ENCODE measurements at regions of chrX and their contacts with region 1.

Region 1: GRCh38 chrX:106894392-106894909 is 8.7 kb downstream of the RIPPLY1 start:
- DNase-seq: peak; percentile 62
- ATAC-seq: peak; percentile 93
- H3K4me3 ChIP-seq: peak overlapping the region in 1 of 2 experiments; percentile 38; a peak in 2 of 4 replicates
- H3K27ac ChIP-seq: peak overlapping the region; percentile 55; the same call in 1 of the 2 replicates
- H3K4me1 ChIP-seq: peaks cover 19% of the 10 kb centered on the region
- H3K27me3 ChIP-seq: no peaks in the 10 kb centered on the region
- CTCF ChIP-seq: peak; percentile 92

Region 2: GRCh38 chrX:106874075-106874474 is 20.4 kb before region 1 on chrX:
- CTCF ChIA-PET with region 1: interaction called, 7 read pairs
- POLR2A ChIA-PET with region 1: interaction called, 10 read pairs
- in situ Hi-C with region 1: no loop called
- intact Hi-C with region 1: no loop called
- DNase-seq: no peak
- ATAC-seq: no peak
- H3K4me3 ChIP-seq: no peak overlapping the region
- H3K27ac ChIP-seq: no peak overlapping the region
- H3K4me1 ChIP-seq: no peaks in the 10 kb centered on the region
- H3K27me3 ChIP-seq: no peaks in the 10 kb centered on the region
- CTCF ChIP-seq: peak; percentile 65; the same call in 1 of the 2 replicates

Region 3: GRCh38 chrX:106939566-106939965 is 45.1 kb after region 1 on chrX:
- CTCF ChIA-PET with region 1: interaction called, 15 read pairs
- POLR2A ChIA-PET with region 1: no interaction called
- in situ Hi-C with region 1: no loop called
- intact Hi-C with region 1: no loop called
- DNase-seq: no peak
- ATAC-seq: no peak
- H3K4me3 ChIP-seq: no peak overlapping the region
- H3K27ac ChIP-seq: no peak overlapping the region
- H3K4me1 ChIP-seq: no peaks in the 10 kb centered on the region
- H3K27me3 ChIP-seq: no peaks in the 10 kb centered on the region
- CTCF ChIP-seq: no peak

Region 4: GRCh38 chrX:106952988-106953387 is 58.5 kb after region 1 on chrX:
- CTCF ChIA-PET with region 1: no interaction called
- POLR2A ChIA-PET with region 1: no interaction called
- in situ Hi-C with region 1: no loop called
- intact Hi-C with region 1: loop called (anchors 1 kb)
- DNase-seq: no peak
- ATAC-seq: 0 out of 2 replicates have a peak, but pooled peaks have one; percentile 55
- H3K4me3 ChIP-seq: no peak overlapping the region
- H3K27ac ChIP-seq: no peak overlapping the region
- H3K4me1 ChIP-seq: peaks cover 3% of the 10 kb centered on the region
- H3K27me3 ChIP-seq: no peaks in the 10 kb centered on the region
- CTCF ChIP-seq: peak; percentile 61; the same call in 1 of the 2 replicates

Region 5: DNA sequence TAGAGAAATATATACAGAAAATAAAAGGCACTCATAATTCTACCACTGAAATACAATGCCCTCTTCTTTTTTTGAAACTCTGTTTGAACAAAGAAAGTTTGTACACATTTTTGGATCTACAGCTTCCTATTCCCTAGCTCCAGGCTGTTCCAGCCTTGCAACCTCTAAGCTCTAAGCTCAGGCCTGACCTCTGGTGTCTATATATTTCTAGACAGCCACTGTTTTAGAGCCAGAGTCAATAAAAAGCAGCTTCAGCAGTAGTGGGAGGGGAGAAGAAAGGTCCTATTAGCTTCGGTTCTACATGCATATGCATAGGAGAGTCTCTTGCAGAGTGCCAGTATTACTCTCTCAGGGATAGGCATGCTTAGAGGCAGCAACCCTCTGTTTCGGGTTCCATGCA is 65.5 kb after region 1 on chrX:
- CTCF ChIA-PET with region 1: interaction called, 25 read pairs
- POLR2A ChIA-PET with region 1: no interaction called
- in situ Hi-C with region 1: no loop called
- intact Hi-C with region 1: loop called (anchors 2 kb)
- DNase-seq: no peak
- ATAC-seq: peak; percentile 88
- H3K4me3 ChIP-seq: no peak overlapping the region
- H3K27ac ChIP-seq: no peak overlapping the region
- H3K4me1 ChIP-seq: peaks cover under 1% of the 10 kb centered on the region
- H3K27me3 ChIP-seq: no peaks in the 10 kb centered on the region
- CTCF ChIP-seq: peak; percentile 55

Region 6: DNA sequence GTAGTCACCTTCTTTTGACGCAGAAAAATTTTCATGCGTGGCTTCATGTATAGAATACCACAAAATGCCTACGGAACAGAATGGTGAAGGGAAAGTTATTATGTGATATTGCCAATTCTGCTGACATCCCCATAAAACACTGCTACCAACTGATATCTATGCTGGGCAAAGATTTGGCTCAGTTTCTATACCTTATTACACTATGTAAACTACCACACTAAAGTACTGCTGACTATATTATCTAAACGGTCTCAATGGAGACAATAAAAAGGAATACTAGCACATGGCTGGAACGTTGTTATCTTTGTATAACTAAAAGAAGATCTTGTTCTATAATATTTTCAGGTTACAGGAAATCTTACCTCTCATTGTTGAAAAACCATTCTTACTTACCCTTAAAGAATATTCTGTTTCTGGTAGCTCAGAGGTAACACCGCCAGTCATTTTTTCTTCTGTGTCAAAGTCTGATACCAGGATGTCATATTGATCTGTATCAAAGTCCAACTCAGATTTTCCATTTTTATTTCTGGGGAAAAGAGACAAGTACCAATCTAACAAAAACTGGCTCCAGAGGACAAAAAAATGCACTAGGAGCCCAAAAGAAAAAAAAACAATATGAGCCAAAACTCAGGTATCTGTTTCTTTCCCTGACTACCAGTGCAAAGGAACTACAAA is 86.6 kb after region 1 on chrX:
- CTCF ChIA-PET with region 1: no interaction called
- POLR2A ChIA-PET with region 1: no interaction called
- in situ Hi-C with region 1: no loop called
- intact Hi-C with region 1: no loop called
- DNase-seq: no peak
- ATAC-seq: no peak
- H3K4me3 ChIP-seq: no peak overlapping the region
- H3K27ac ChIP-seq: no peak overlapping the region
- H3K4me1 ChIP-seq: no peaks in the 10 kb centered on the region
- H3K27me3 ChIP-seq: no peaks in the 10 kb centered on the region
- CTCF ChIP-seq: no peak

Measured in Panc1 (cell line).